Transverse colon (tissue), 4 donors: ENCODE measurements at regions of chr14 and their contacts with region 1.

Region 1: GRCh38 chr14:21383848-21384493 is at the start of gene SUPT16H:
- DNase-seq: peak; percentile 97
- H3K4me3 ChIP-seq: peak within 1 kb of the TSS; percentile 67 to 97 (median 82)
- H3K27ac ChIP-seq: peak within 1 kb of the TSS; percentile 92 to 96 (median 94)
- H3K4me1 ChIP-seq: peaks cover 11 to 27% (median 16%) of the 10 kb centered on the region in 4 donors
- H3K27me3 ChIP-seq: no peaks in the 10 kb centered on the region
- CTCF ChIP-seq: peak in 2 of 5 experiments; percentile 21 to 22
- EP300 ChIP-seq: no peak
- POLR2A ChIP-seq: peak; percentile 72
- total RNA-seq, gene SUPT16H: 21.5 to 43.5 (median 36.4) TPM

Region 2: GRCh38 chr14:21241218-21241819 is 142.7 kb before region 1 on chr14:
- in situ Hi-C with region 1: loop called in 1 of 4 experiments (anchors 25 kb)
- intact Hi-C with region 1: no loop called
- DNase-seq: no peak
- H3K4me3 ChIP-seq: no peak overlapping the region
- H3K27ac ChIP-seq: no peak overlapping the region
- H3K4me1 ChIP-seq: peaks cover 0 to 37% (median 7%) of the 10 kb centered on the region in 4 donors
- H3K27me3 ChIP-seq: no peaks in the 10 kb centered on the region
- CTCF ChIP-seq: peak in 4 of 5 experiments; percentile 21 to 42 (median 28)
- EP300 ChIP-seq: no peak
- POLR2A ChIP-seq: no peak

Region 3: GRCh38 chr14:21257394-21257909 is 126.5 kb before region 1 on chr14:
- in situ Hi-C with region 1: loop called in 1 of 4 experiments (anchors 10 kb)
- intact Hi-C with region 1: no loop called
- DNase-seq: no peak
- H3K4me3 ChIP-seq: no peak overlapping the region
- H3K27ac ChIP-seq: no peak overlapping the region
- H3K4me1 ChIP-seq: peaks cover 29 to 66% (median 37%) of the 10 kb centered on the region in 4 donors
- H3K27me3 ChIP-seq: no peaks in the 10 kb centered on the region
- CTCF ChIP-seq: no peak
- EP300 ChIP-seq: no peak
- POLR2A ChIP-seq: no peak

Region 4: GRCh38 chr14:21308479-21309237 is 75.3 kb before region 1 on chr14:
- in situ Hi-C with region 1: no loop called
- intact Hi-C with region 1: no loop called
- DNase-seq: peak; percentile 90
- H3K4me3 ChIP-seq: peak overlapping the region in 3 of 4 donors; percentile 27 to 45 (median 34)
- H3K27ac ChIP-seq: peak overlapping the region; percentile 76 to 82 (median 82)
- H3K4me1 ChIP-seq: peaks cover 0 to 17% (median 8%) of the 10 kb centered on the region in 4 donors
- H3K27me3 ChIP-seq: no peaks in the 10 kb centered on the region
- CTCF ChIP-seq: no peak
- EP300 ChIP-seq: no peak
- POLR2A ChIP-seq: peak; percentile 84

Region 5: DNA sequence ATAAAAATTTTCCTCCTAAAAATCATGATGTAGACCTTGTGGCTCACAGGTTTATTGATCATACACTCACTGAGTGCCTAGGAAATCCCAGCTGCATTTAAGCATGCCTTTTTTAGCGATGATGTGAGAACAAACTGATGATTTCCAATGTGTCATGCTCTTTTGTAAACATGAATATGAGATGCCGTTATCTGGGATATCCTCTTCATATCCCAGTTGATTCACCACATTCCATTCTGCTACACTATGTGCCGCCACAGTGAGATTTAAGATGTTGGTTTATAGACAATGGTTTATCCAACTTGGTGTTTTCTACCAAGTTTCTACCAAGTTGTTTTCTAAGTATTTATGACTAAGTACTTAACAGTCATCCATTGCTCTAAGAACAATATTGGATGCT is 284.4 kb after region 1 on chr14:
- in situ Hi-C with region 1: no loop called
- intact Hi-C with region 1: no loop called
- DNase-seq: no peak
- H3K4me3 ChIP-seq: no peak overlapping the region
- H3K27ac ChIP-seq: no peak overlapping the region
- H3K4me1 ChIP-seq: no peaks in the 10 kb centered on the region
- H3K27me3 ChIP-seq: no peaks in the 10 kb centered on the region
- CTCF ChIP-seq: no peak
- EP300 ChIP-seq: no peak
- POLR2A ChIP-seq: no peak